Ovary (tissue), 10 donors: ENCODE measurements at regions of chr6 and their contacts with region 1.

Region 1: GRCh38 chr6:114354482-114354881 is 11.7 kb upstream of the HS3ST5 start:
- DNase-seq: no peak
- H3K4me3 ChIP-seq: no peak overlapping the region
- H3K27ac ChIP-seq: no peak overlapping the region
- H3K4me1 ChIP-seq: no peaks in the 10 kb centered on the region
- H3K27me3 ChIP-seq: no peaks in the 10 kb centered on the region
- CTCF ChIP-seq: no peak
- EP300 ChIP-seq: no peak
- POLR2A ChIP-seq: no peak

Region 2: GRCh38 chr6:114376611-114377175 is 22.2 kb after region 1 on chr6:
- intact Hi-C with region 1: loop called in 1 of 4 experiments (anchors 1 kb)
- DNase-seq: no peak
- H3K4me3 ChIP-seq: no peak overlapping the region
- H3K27ac ChIP-seq: no peak overlapping the region
- H3K4me1 ChIP-seq: no peaks in the 10 kb centered on the region
- H3K27me3 ChIP-seq: no peaks in the 10 kb centered on the region
- CTCF ChIP-seq: no peak
- EP300 ChIP-seq: no peak
- POLR2A ChIP-seq: no peak